Dendritic cell treated with granulocyte-macrophage colony-stimulating factor and Interleukin-4, amounts not matched to agents 40 ng/mL and 50 ng/mL, for 4 days (primary cell): ENCODE measurements at regions of chr11 and their contacts with region 1.

Region 1: DNA sequence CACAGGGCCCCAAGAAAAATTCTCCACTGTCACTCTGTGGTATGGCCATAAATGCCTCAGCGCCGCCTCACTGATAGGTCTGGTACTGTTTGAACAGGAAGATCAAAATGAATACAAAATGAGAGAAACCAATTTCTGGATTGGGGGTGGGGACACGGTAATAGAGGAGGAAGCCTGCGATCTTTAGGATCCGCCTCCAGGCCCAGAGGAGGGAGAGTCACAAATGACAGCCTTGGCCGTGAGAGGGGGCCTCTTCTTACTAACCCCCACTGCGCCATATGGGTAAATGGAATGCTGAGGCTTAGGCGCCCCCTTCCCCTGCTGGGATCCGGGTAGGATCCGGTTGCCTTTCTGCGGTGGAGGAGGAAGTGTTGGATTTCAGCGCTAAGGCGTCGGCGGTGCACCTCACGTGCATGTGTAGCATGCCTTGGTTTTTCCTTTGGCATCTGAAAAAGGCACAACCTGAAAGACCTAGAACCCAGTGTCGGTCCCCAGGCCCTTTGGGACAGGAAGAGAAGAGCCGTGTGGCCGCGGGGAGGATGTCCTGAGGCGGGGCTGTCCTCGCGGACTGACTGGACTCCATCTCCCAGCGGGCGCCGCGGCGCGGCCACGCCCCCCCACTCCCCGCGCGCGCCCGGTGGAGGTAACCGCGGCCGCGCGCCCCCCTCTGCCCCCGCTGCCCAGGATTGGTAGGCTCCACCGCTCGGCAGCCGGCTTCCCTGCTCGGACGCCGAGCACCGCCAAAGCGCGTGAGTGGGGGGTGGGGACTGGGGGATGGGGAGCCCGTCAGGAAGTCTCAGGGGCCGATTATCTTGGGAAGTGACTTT is 718 bp upstream of the MADD start:
- H3K4me3 Mint-ChIP-seq: peak overlapping the region; percentile 93
- H3K27ac Mint-ChIP-seq: peak overlapping the region; percentile 93
- H3K4me1 Mint-ChIP-seq: peaks cover 52% of the 10 kb centered on the region
- H3K27me3 Mint-ChIP-seq: no peaks in the 10 kb centered on the region

Region 2: DNA sequence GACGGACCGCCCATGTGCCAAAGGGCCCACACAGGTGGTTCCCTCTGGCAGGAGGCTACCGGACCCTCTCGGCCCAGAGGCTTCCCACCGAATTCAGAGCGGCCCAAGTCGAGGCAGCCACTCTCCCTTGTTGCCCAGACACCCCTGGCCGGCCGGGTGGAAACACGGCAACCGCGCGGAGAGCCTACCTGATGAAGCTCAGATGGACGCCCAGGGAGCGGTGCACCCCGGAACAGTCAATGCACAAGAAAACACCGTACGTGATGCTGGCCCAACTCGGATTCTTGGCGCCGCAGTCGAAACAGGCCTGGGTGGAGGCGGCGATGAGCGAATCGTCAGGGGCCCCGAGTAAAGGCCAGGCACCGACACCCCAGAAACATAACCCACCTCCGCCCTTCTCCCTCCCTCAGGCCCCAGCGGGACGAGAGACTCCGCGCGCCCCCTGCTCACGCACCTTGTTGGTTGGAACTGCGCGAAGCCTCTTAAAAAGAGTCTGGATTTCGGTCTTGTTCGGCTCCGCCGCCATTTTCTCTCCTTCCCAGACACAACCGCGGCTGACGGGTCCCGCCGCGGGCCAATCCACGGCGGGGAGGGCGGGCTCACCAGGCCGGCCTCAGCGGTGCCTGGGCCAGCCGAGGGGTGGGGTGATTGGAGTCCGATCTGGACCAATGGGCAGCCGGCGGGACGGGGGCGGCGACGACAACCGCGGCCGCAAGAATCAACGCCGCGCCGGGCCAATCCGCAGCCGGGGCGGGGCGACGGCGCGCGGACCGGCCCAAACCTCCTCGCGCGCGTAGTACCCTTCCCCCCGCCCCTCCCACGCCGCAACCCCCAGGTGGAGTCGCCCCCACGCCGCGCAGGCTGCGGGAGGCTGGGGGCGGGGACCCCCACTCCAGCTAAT is 92.6 kb before region 1 on chr11 and contains the start of gene ARFGAP2:
- intact Hi-C with region 1: loop called (anchors 1 kb)
- H3K4me3 Mint-ChIP-seq: peak within 1 kb of the TSS; percentile 98
- H3K27ac Mint-ChIP-seq: peak within 1 kb of the TSS; percentile 91
- H3K4me1 Mint-ChIP-seq: peaks cover 50% of the 10 kb centered on the region
- H3K27me3 Mint-ChIP-seq: no peaks in the 10 kb centered on the region

Region 3: GRCh38 chr11:47213985-47214564 is 55.1 kb before region 1 on chr11:
- intact Hi-C with region 1: loop called (anchors 1 kb)
- H3K4me3 Mint-ChIP-seq: peak overlapping the region; percentile 98
- H3K27ac Mint-ChIP-seq: peak overlapping the region; percentile 96
- H3K4me1 Mint-ChIP-seq: peaks cover 38% of the 10 kb centered on the region
- H3K27me3 Mint-ChIP-seq: no peaks in the 10 kb centered on the region

Region 4: GRCh38 chr11:47233989-47234668 is 35.1 kb before region 1 on chr11:
- intact Hi-C with region 1: loop called (anchors 5 kb)
- H3K4me3 Mint-ChIP-seq: no peak overlapping the region
- H3K27ac Mint-ChIP-seq: no peak overlapping the region
- H3K4me1 Mint-ChIP-seq: peaks cover 24% of the 10 kb centered on the region
- H3K27me3 Mint-ChIP-seq: no peaks in the 10 kb centered on the region

Region 5: GRCh38 chr11:47244448-47245350 is 24.5 kb before region 1 on chr11:
- intact Hi-C with region 1: loop called (anchors 1 kb)
- H3K4me3 Mint-ChIP-seq: peak overlapping the region; percentile 60
- H3K27ac Mint-ChIP-seq: peak overlapping the region; percentile 98
- H3K4me1 Mint-ChIP-seq: peaks cover 71% of the 10 kb centered on the region
- H3K27me3 Mint-ChIP-seq: no peaks in the 10 kb centered on the region